ENCODE measurements at regions of chr9 and their contacts with region 1.

Region 1: GRCh38 chr9:34546834-34547827 is 24.3 kb upstream of the ENHO start:
- DNase-seq: peak; percentile 78
- H3K4me3 ChIP-seq: no peak overlapping the region
- H3K27ac ChIP-seq: no peak overlapping the region
- H3K4me1 ChIP-seq: peaks cover 0 to 14% (median 6%) of the 10 kb centered on the region in 4 donors
- H3K27me3 ChIP-seq: no peaks in the 10 kb centered on the region
- CTCF ChIP-seq: peak; percentile 24 to 75 (median 68)
- EP300 ChIP-seq: no peak
- POLR2A ChIP-seq: no peak

Region 2: GRCh38 chr9:34603610-34604231 is 56.6 kb after region 1 on chr9:
- intact Hi-C with region 1: loop called (anchors 2 kb)
- DNase-seq: peak; percentile 89
- H3K4me3 ChIP-seq: no peak overlapping the region
- H3K27ac ChIP-seq: no peak overlapping the region
- H3K4me1 ChIP-seq: no peaks in the 10 kb centered on the region
- H3K27me3 ChIP-seq: no peaks in the 10 kb centered on the region
- CTCF ChIP-seq: peak; percentile 79 to 92 (median 89)
- EP300 ChIP-seq: no peak
- POLR2A ChIP-seq: no peak

Measured in sigmoid colon (tissue), 7 donors.